Caco-2 (cell line): ENCODE measurements at regions of chr12 and their contacts with region 1.

Region 1: DNA sequence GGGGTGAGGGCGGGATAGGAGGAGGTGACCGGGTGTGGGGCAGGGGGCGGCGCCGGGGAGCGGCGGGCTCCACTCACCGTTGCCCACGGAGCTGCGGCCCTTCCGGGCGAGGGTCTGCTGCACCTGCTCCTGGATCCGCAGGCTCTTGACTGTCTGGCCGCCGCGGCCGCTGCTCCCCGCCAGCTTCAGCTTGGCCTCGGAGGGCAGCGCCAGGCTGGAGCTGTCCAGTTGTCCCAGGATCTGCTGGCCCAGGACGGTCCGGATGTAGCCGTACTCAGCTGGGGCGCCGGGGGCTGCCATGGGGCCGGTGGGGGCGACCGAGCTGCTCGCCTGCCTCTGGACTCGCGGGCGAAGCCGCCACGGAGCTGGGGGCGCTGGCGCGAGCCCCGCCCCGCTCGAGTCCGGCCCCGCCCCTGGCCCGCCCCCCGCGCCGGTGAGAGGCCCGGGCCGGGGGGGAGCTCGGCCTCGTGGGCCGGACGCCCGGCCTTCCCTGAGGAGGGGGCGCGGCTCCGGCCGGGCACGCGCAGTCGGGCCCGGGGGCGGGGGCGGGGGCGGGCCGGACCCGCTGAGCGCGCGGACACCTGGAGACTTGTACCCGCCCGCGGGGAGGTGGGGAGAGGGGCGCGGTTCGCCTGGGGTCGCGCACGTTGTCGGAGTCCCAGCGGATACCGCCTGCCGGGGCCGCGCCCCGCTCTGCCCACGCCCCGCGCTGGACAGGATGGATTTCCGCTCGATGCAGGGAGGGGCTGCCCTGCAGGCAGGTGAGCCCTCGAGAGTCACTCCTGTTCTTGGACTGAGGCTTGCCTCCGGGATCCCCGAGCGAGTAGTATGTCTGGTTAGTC is at the start of gene PKP2:
- DNase-seq: peak; percentile 100
- H3K4me3 ChIP-seq: peak within 1 kb of the TSS; percentile 95
- H3K4me3 Mint-ChIP-seq: peak within 1 kb of the TSS; percentile 91
- H3K27ac Mint-ChIP-seq: peak within 1 kb of the TSS; percentile 87
- H3K4me1 ChIP-seq: peaks cover 52% of the 10 kb centered on the region
- H3K4me1 Mint-ChIP-seq: peaks cover 50% of the 10 kb centered on the region
- H3K27me3 ChIP-seq: no peaks in the 10 kb centered on the region
- H3K27me3 Mint-ChIP-seq: no peaks in the 10 kb centered on the region
- CTCF ChIP-seq: no peak
- total RNA-seq, gene PKP2: 249 and 275 TPM in 2 replicates

Region 2: GRCh38 chr12:31369712-31370521 is 1526.7 kb before region 1 on chr12:
- CTCF ChIA-PET with region 1: no interaction called
- POLR2A ChIA-PET with region 1: no interaction called
- intact Hi-C with region 1: loop called (anchors 5 kb)
- DNase-seq: peak; percentile 72 to 75
- H3K4me3 ChIP-seq: peak overlapping the region; percentile 27
- H3K4me3 Mint-ChIP-seq: peak overlapping the region; percentile 70
- H3K27ac Mint-ChIP-seq: peak overlapping the region; percentile 100
- H3K4me1 ChIP-seq: peaks cover 26% of the 10 kb centered on the region
- H3K4me1 Mint-ChIP-seq: peaks cover 43% of the 10 kb centered on the region
- H3K27me3 ChIP-seq: no peaks in the 10 kb centered on the region
- H3K27me3 Mint-ChIP-seq: no peaks in the 10 kb centered on the region
- CTCF ChIP-seq: no peak

Region 3: GRCh38 chr12:32679091-32679919 is 217.3 kb before region 1 on chr12 and contains the start of gene DNM1L:
- CTCF ChIA-PET with region 1: no interaction called
- POLR2A ChIA-PET with region 1: interaction called, 5 read pairs
- intact Hi-C with region 1: loop called (anchors 5 kb)
- DNase-seq: peak; percentile 99
- H3K4me3 ChIP-seq: peak within 1 kb of the TSS; percentile 86
- H3K4me3 Mint-ChIP-seq: peak within 1 kb of the TSS; percentile 97
- H3K27ac Mint-ChIP-seq: peak within 1 kb of the TSS; percentile 95
- H3K4me1 ChIP-seq: peaks cover 22% of the 10 kb centered on the region
- H3K4me1 Mint-ChIP-seq: peaks cover 19% of the 10 kb centered on the region
- H3K27me3 ChIP-seq: no peaks in the 10 kb centered on the region
- H3K27me3 Mint-ChIP-seq: no peaks in the 10 kb centered on the region
- CTCF ChIP-seq: peak in 1 of 2 experiments; percentile 18
- total RNA-seq, gene DNM1L: 136 and 137 TPM in 2 replicates

Region 4: DNA sequence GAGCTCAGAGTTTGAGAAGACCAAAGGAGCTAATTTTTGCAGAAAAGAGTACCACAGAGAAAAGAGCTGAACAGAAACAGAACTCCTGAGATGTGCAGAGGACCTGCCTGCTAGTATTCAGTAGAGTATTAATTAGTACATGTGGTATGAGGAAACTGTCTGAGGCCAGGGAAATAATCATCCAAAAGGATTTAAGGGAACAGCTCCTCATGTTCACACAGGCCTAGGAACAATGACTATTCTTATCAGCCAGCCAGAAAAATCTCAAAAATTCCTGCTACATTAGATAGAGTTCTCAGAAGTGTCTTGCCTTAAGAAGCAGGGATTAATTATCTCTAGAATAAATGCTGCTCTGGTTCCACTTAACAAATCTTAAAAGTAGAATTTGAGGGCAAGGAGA is 36.5 kb before region 1 on chr12:
- CTCF ChIA-PET with region 1: no interaction called
- POLR2A ChIA-PET with region 1: interaction called, 3 read pairs
- intact Hi-C with region 1: loop called (anchors 1 kb)
- DNase-seq: peak in 1 of 2 experiments; percentile 37
- H3K4me3 ChIP-seq: no peak overlapping the region
- H3K4me3 Mint-ChIP-seq: peak overlapping the region; percentile 28
- H3K27ac Mint-ChIP-seq: peak overlapping the region; percentile 51
- H3K4me1 ChIP-seq: peaks cover 42% of the 10 kb centered on the region
- H3K4me1 Mint-ChIP-seq: peaks cover 48% of the 10 kb centered on the region
- H3K27me3 ChIP-seq: no peaks in the 10 kb centered on the region
- H3K27me3 Mint-ChIP-seq: no peaks in the 10 kb centered on the region
- CTCF ChIP-seq: no peak

Region 5: GRCh38 chr12:32983968-32984367 is 87.3 kb after region 1 on chr12:
- CTCF ChIA-PET with region 1: no interaction called
- POLR2A ChIA-PET with region 1: no interaction called
- intact Hi-C with region 1: loop called (anchors 1 kb)
- DNase-seq: peak; percentile 55 to 67
- H3K4me3 ChIP-seq: no peak overlapping the region
- H3K4me3 Mint-ChIP-seq: peak overlapping the region; percentile 2
- H3K27ac Mint-ChIP-seq: peak overlapping the region; percentile 29
- H3K4me1 ChIP-seq: peaks cover 57% of the 10 kb centered on the region
- H3K4me1 Mint-ChIP-seq: peaks cover 53% of the 10 kb centered on the region
- H3K27me3 ChIP-seq: no peaks in the 10 kb centered on the region
- H3K27me3 Mint-ChIP-seq: no peaks in the 10 kb centered on the region
- CTCF ChIP-seq: no peak